ENCODE measurements at regions of chr20 and their contacts with region 1.

Region 1: GRCh38 chr20:62937366-62938104 is 412 bp upstream of the GID8 start:
- DNase-seq: peak; percentile 98
- H3K4me3 Mint-ChIP-seq: no peak overlapping the region
- H3K27ac Mint-ChIP-seq: peak overlapping the region; percentile 96
- H3K4me1 Mint-ChIP-seq: peaks cover 37% of the 10 kb centered on the region
- H3K27me3 Mint-ChIP-seq: no peaks in the 10 kb centered on the region

Region 2: DNA sequence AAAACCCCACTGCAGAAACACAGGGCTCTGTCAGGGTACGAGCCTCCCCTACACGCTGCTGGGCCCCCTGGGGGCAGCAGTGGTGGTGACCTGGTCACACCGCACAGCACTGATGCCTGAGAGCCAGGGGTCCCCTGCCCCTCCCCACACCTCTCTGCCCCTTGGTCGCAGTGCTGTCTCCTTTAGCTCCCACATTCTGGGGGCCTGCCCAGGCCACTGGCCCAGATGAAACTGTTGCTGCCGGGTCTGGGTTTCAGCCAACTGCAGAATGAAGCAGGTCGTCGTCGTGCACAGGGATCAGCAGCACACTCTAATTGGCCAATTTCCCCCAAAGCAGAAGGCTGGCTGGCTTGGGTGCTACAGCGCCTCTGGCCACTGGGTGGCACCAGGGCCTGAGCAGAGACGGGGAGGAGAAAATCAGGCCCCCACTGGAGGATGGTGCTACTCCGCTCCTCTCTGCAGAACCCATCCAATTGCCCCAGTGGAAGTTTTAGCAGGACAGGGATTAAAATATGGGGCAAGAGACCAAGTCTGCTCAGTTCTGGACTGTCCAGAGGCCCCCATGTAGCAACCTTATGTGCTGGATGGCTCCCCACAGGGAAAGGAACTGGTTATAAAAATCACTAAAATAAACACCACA is 37.4 kb before region 1 on chr20:
- CTCF ChIA-PET with region 1: interaction called, 8 read pairs
- POLR2A ChIA-PET with region 1: interaction called, 5 read pairs
- intact Hi-C with region 1: loop called (anchors 5 kb)
- DNase-seq: peak; percentile 83
- H3K4me3 Mint-ChIP-seq: peak overlapping the region; percentile 45
- H3K27ac Mint-ChIP-seq: peak overlapping the region; percentile 81
- H3K4me1 Mint-ChIP-seq: peaks cover 41% of the 10 kb centered on the region
- H3K27me3 Mint-ChIP-seq: no peaks in the 10 kb centered on the region

Region 3: DNA sequence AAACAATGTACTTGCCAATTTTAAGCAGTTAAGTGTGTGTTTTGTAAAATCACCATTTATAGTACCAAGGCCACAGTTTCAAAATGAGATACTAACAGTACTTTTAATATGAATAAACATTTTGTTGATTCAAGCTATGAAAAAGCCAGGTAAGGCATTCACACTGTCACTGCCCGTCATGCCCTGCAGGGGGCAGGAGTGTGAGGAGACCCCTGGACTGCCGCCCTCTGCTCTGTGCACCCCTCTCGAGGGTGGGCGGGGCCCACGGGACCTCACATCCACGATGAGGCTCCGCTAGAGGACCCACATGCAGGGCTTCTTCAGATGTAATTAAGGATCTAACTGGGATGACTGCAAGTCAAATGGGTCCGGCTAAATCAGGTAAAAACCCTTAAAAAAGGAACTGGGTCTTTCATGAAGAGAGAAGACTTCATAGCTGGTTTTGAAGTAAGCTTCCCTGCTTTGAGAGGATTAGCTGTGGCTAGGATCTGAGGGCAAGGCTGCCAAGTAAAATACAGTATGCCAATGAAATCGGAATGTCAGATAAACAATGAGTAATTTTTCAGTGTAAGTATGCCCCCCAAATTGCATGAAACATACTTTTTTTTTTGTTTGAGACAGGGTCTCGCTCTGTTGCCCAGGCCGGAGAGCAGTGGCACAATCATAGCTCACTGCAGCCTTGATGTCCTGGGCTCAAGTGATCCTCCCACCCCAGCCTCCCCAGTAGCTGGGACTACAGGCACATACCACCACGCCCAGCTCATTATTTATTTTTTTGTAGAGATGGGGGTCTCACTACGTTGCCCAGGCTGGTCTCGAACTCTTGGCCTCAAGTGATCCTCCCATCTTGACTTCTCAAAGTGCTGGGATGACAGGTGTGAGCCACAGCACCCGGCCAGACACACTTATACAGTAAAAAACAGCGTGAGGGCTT is 29.9 kb before region 1 on chr20:
- CTCF ChIA-PET with region 1: interaction called, 27 read pairs
- POLR2A ChIA-PET with region 1: interaction called, 5 read pairs
- intact Hi-C with region 1: no loop called
- DNase-seq: peak; percentile 47
- H3K4me3 Mint-ChIP-seq: no peak overlapping the region
- H3K27ac Mint-ChIP-seq: peak overlapping the region; percentile 67
- H3K4me1 Mint-ChIP-seq: peaks cover 17% of the 10 kb centered on the region
- H3K27me3 Mint-ChIP-seq: no peaks in the 10 kb centered on the region

Region 4: GRCh38 chr20:62921119-62921687 is 16.3 kb before region 1 on chr20:
- CTCF ChIA-PET with region 1: interaction called, 15 read pairs
- POLR2A ChIA-PET with region 1: interaction called, 36 read pairs
- intact Hi-C with region 1: loop called (anchors 1 kb)
- DNase-seq: peak; percentile 82
- H3K4me3 Mint-ChIP-seq: peak overlapping the region; percentile 64
- H3K27ac Mint-ChIP-seq: peak overlapping the region; percentile 83
- H3K4me1 Mint-ChIP-seq: peaks cover 74% of the 10 kb centered on the region
- H3K27me3 Mint-ChIP-seq: no peaks in the 10 kb centered on the region

Region 5: GRCh38 chr20:62953839-62954703 is 16.5 kb after region 1 on chr20:
- CTCF ChIA-PET with region 1: no interaction called
- POLR2A ChIA-PET with region 1: interaction called, 8 read pairs
- intact Hi-C with region 1: loop called (anchors 1 kb)
- DNase-seq: peak; percentile 81
- H3K4me3 Mint-ChIP-seq: peak overlapping the region; percentile 58
- H3K27ac Mint-ChIP-seq: peak overlapping the region; percentile 52
- H3K4me1 Mint-ChIP-seq: peaks cover 19% of the 10 kb centered on the region
- H3K27me3 Mint-ChIP-seq: no peaks in the 10 kb centered on the region

Region 6: DNA sequence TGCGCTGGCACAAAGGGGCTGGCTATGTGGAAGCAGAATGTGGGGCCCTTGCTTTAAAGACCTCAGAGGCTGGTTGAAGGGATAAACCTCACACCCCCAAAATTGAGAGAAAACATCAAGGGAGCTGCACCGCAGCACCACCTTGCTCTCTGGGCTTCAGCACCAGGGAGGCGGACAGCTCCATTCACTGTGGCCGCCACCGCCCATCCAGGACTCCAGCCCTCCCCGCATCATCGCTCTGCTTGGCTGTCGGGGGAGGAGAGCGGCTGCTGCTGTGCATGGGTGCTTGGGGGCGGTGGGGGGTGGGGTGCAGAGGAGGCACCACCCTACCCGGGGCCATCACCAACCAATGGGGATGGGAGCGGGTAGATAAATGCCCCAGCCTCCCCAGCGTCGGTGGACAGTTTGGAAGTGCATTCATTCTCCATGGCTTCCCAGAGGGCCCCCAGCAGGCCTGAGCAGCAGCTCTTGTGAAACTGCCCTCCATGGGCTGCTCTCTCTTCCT is 144.8 kb after region 1 on chr20:
- CTCF ChIA-PET with region 1: no interaction called
- POLR2A ChIA-PET with region 1: no interaction called
- intact Hi-C with region 1: no loop called
- DNase-seq: peak; percentile 49
- H3K4me3 Mint-ChIP-seq: no peak overlapping the region
- H3K27ac Mint-ChIP-seq: no peak overlapping the region
- H3K4me1 Mint-ChIP-seq: no peaks in the 10 kb centered on the region
- H3K27me3 Mint-ChIP-seq: peaks cover 23% of the 10 kb centered on the region

Measured in activated CD4-positive, alpha-beta memory T cell treated with anti-CD3 and anti-CD28 coated beads for 36 hours (primary cell).